Astrocyte of the cerebellum (primary cell): ENCODE measurements at regions of chr2 and their contacts with region 1.

Region 1: DNA sequence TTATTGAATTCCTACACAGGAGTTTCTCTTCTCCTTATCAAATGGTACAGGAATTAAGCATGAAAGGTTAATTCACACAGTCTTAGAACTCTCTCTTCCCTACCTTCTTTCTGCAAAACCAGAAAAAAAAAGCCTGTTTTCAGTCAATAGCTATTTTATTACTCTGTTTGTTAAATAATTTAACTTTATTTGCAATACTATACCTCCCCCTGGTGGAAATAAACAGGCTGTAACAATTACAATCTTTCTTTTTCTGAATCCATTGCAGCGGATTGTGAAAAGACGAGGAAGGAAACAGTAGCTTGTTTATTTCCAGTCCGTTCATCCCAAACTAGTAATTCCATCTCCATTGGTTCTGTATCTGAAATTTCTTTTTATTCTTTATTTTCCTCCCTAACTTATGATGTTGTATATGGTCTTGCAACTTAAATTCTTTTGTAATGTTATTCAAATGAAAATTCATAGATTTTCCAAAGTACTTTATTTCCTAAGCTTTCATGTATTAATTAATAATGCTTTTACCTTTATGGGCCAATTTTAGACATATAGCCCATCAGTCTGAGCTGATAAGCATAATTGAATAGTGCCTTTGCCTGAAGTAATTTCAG is 165.2 kb downstream of the SH3BP4 start:
- DNase-seq: peak; percentile 26
- H3K4me3 ChIP-seq: no peak overlapping the region
- CTCF ChIP-seq: peak; percentile 32

Region 2: GRCh38 chr2:233976690-233977294 is 1140.2 kb before region 1 on chr2:
- in situ Hi-C with region 1: loop called (anchors 10 kb)
- DNase-seq: peak; percentile 76
- H3K4me3 ChIP-seq: no peak overlapping the region
- CTCF ChIP-seq: peak; percentile 45

Region 3: GRCh38 chr2:234251326-234252271 is 865.4 kb before region 1 on chr2:
- in situ Hi-C with region 1: loop called (anchors 5 kb)
- DNase-seq: peak; percentile 100
- H3K4me3 ChIP-seq: no peak overlapping the region
- CTCF ChIP-seq: no peak

Region 4: GRCh38 chr2:234433201-234433600 is 683.8 kb before region 1 on chr2:
- in situ Hi-C with region 1: loop called (anchors 5 kb)
- DNase-seq: no peak
- H3K4me3 ChIP-seq: no peak overlapping the region
- CTCF ChIP-seq: no peak

Region 5: GRCh38 chr2:235034265-235035118 is 82.5 kb before region 1 on chr2:
- in situ Hi-C with region 1: no loop called
- DNase-seq: no peak
- H3K4me3 ChIP-seq: no peak overlapping the region
- CTCF ChIP-seq: no peak